Activated B cell treated with CpG ODN at 0.5 μM for 24 hours (primary cell): ENCODE measurements at regions of chr4 and their contacts with region 1.

Region 1: GRCh38 chr4:52712172-52712990 is 38.8 kb downstream of the ERVMER34-1 start:
- DNase-seq: peak; percentile 92
- ATAC-seq: peak; percentile 94
- H3K4me3 Mint-ChIP-seq: peak overlapping the region; percentile 92
- H3K27ac Mint-ChIP-seq: peak overlapping the region; percentile 95
- H3K4me1 Mint-ChIP-seq: peaks cover 64% of the 10 kb centered on the region
- H3K27me3 Mint-ChIP-seq: no peaks in the 10 kb centered on the region
- CTCF ChIP-seq: no peak

Region 2: GRCh38 chr4:52051619-52052474 is 660.5 kb before region 1 on chr4:
- CTCF ChIA-PET with region 1: no interaction called
- POLR2A ChIA-PET with region 1: no interaction called
- intact Hi-C with region 1: loop called (anchors 2 kb)
- DNase-seq: peak; percentile 31
- ATAC-seq: peak; percentile 43
- H3K4me3 Mint-ChIP-seq: peak overlapping the region; percentile 88
- H3K27ac Mint-ChIP-seq: peak overlapping the region; percentile 51
- H3K4me1 Mint-ChIP-seq: peaks cover 26% of the 10 kb centered on the region
- H3K27me3 Mint-ChIP-seq: peaks cover 36% of the 10 kb centered on the region
- CTCF ChIP-seq: no peak

Region 3: DNA sequence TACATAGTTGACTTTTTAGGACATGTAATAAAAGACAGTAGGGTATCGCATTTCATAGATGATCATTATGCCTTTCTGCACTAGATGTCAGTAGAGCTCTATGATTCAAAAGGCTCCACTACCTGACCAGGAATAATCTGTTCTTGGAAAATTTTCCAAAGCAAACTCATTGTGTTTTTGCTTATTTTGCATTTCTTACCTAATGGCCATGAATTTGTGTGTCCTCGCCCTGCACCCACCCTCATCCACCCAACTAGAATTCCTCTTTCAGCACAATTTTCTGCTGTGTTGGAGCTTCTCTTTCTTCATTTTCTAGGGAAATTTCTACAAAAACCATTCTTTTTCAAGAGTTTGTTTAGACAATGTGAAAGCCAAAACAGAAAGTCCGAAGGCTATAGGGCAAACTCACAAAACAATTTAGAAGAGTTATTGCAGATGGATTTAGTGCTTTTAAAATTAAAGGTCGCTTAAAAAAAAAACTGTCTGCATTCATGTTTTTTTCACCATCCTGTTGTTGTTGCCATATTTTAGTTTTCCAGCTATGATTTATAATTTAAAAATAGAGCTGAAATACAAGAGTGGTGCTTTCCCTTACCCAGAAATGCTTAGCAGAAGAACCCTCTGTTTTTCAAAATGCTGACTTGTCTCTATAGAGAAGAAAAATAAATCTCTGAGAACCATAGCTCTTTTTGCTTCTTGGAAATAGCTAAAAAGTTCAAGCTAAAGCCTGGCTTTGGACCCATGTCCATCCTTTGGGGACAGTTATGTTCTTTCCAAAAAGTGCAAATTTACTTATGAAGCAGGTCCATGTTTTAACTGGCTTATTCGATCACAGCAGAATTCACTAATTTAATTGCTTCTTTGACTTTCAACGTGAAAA is 477.6 kb before region 1 on chr4:
- CTCF ChIA-PET with region 1: no interaction called
- POLR2A ChIA-PET with region 1: no interaction called
- intact Hi-C with region 1: no loop called
- DNase-seq: no peak
- ATAC-seq: no peak
- H3K4me3 Mint-ChIP-seq: no peak overlapping the region
- H3K27ac Mint-ChIP-seq: no peak overlapping the region
- H3K4me1 Mint-ChIP-seq: no peaks in the 10 kb centered on the region
- H3K27me3 Mint-ChIP-seq: peaks cover 7% of the 10 kb centered on the region
- CTCF ChIP-seq: no peak

Region 4: GRCh38 chr4:52572936-52573485 is 139.4 kb before region 1 on chr4:
- CTCF ChIA-PET with region 1: no interaction called
- POLR2A ChIA-PET with region 1: no interaction called
- intact Hi-C with region 1: no loop called
- DNase-seq: no peak
- ATAC-seq: no peak
- H3K4me3 Mint-ChIP-seq: no peak overlapping the region
- H3K27ac Mint-ChIP-seq: no peak overlapping the region
- H3K4me1 Mint-ChIP-seq: no peaks in the 10 kb centered on the region
- H3K27me3 Mint-ChIP-seq: peaks cover 7% of the 10 kb centered on the region
- CTCF ChIP-seq: no peak

Region 5: DNA sequence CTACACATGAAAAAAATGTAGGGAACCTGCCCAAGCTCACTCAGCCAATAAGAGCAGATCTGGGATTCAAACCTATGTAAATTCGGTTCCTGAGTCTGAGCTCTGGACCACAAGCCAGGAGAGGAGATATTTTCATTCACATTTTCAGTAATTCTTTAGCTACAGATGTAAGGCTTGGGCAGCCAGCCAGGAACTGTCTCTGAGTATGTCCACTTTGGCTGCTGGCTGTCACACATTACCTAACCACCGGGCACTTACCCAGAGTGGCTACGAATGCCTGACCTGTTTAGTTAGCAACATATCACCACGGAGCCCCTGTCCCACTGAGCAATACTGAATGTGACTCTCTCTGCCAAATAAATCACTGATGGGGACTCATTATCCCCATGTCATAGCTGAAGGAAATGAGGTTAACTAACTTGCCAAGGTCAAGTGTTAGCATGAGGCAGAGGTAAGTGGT is 68.6 kb before region 1 on chr4:
- CTCF ChIA-PET with region 1: no interaction called
- POLR2A ChIA-PET with region 1: interaction called, 10 read pairs
- intact Hi-C with region 1: no loop called
- DNase-seq: no peak
- ATAC-seq: no peak
- H3K4me3 Mint-ChIP-seq: no peak overlapping the region
- H3K27ac Mint-ChIP-seq: no peak overlapping the region
- H3K4me1 Mint-ChIP-seq: peaks cover 45% of the 10 kb centered on the region
- H3K27me3 Mint-ChIP-seq: no peaks in the 10 kb centered on the region
- CTCF ChIP-seq: no peak

Region 6: GRCh38 chr4:52659001-52659721 is 53.2 kb before region 1 on chr4 and contains the start of gene USP46:
- CTCF ChIA-PET with region 1: no interaction called
- POLR2A ChIA-PET with region 1: interaction called, 69 read pairs
- intact Hi-C with region 1: loop called (anchors 1 kb)
- DNase-seq: peak; percentile 62
- ATAC-seq: peak; percentile 87
- H3K4me3 Mint-ChIP-seq: peak within 1 kb of the TSS; percentile 88
- H3K27ac Mint-ChIP-seq: peak within 1 kb of the TSS; percentile 76
- H3K4me1 Mint-ChIP-seq: peaks cover 19% of the 10 kb centered on the region
- H3K27me3 Mint-ChIP-seq: no peaks in the 10 kb centered on the region
- CTCF ChIP-seq: no peak
- total RNA-seq, gene USP46: 12.6 and 13.3 TPM in 2 replicates

Region 7: GRCh38 chr4:52701207-52701606 is 11.2 kb before region 1 on chr4:
- CTCF ChIA-PET with region 1: interaction called, 3 read pairs
- POLR2A ChIA-PET with region 1: interaction called, 48 read pairs
- intact Hi-C with region 1: loop called (anchors 1 kb)
- DNase-seq: no peak
- ATAC-seq: peak; percentile 79
- H3K4me3 Mint-ChIP-seq: no peak overlapping the region
- H3K27ac Mint-ChIP-seq: peak overlapping the region; percentile 63
- H3K4me1 Mint-ChIP-seq: peaks cover 18% of the 10 kb centered on the region
- H3K27me3 Mint-ChIP-seq: peaks cover 2% of the 10 kb centered on the region
- CTCF ChIP-seq: no peak

Region 8: GRCh38 chr4:52759936-52760655 is 47.7 kb after region 1 on chr4:
- CTCF ChIA-PET with region 1: no interaction called
- POLR2A ChIA-PET with region 1: no interaction called
- intact Hi-C with region 1: no loop called
- DNase-seq: no peak
- ATAC-seq: no peak
- H3K4me3 Mint-ChIP-seq: no peak overlapping the region
- H3K27ac Mint-ChIP-seq: no peak overlapping the region
- H3K4me1 Mint-ChIP-seq: peaks cover 5% of the 10 kb centered on the region
- H3K27me3 Mint-ChIP-seq: peaks cover 25% of the 10 kb centered on the region
- CTCF ChIP-seq: no peak

Region 9: GRCh38 chr4:53855581-53856250 is 1143.3 kb after region 1 on chr4:
- CTCF ChIA-PET with region 1: no interaction called
- POLR2A ChIA-PET with region 1: no interaction called
- intact Hi-C with region 1: loop called (anchors 1 kb)
- DNase-seq: no peak
- ATAC-seq: peak; percentile 89
- H3K4me3 Mint-ChIP-seq: peak overlapping the region; percentile 53
- H3K27ac Mint-ChIP-seq: peak overlapping the region; percentile 79
- H3K4me1 Mint-ChIP-seq: peaks cover 28% of the 10 kb centered on the region
- H3K27me3 Mint-ChIP-seq: no peaks in the 10 kb centered on the region
- CTCF ChIP-seq: no peak

Region 10: GRCh38 chr4:54064295-54065111 is 1352.1 kb after region 1 on chr4 and contains the start of gene CHIC2:
- CTCF ChIA-PET with region 1: no interaction called
- POLR2A ChIA-PET with region 1: no interaction called
- intact Hi-C with region 1: loop called (anchors 2 kb)
- DNase-seq: peak; percentile 95
- ATAC-seq: peak; percentile 90
- H3K4me3 Mint-ChIP-seq: peak within 1 kb of the TSS; percentile 92
- H3K27ac Mint-ChIP-seq: peak within 1 kb of the TSS; percentile 87
- H3K4me1 Mint-ChIP-seq: peaks cover 47% of the 10 kb centered on the region
- H3K27me3 Mint-ChIP-seq: peaks cover 3% of the 10 kb centered on the region
- CTCF ChIP-seq: no peak
- total RNA-seq, gene CHIC2: 17.5 and 21.6 TPM in 2 replicates